ENCODE measurements at regions of chr11 and their contacts with region 1.

Region 1: GRCh38 chr11:63906585-63906984 is 10.4 kb downstream of the RCOR2 start:
- DNase-seq: peak; percentile 81
- H3K4me3 ChIP-seq: no peak overlapping the region
- H3K27ac ChIP-seq: no peak overlapping the region; a peak in 1 of 4 replicates
- H3K4me1 ChIP-seq: peaks cover 0 to 26% of the 10 kb centered on the region in 2 experiments; a peak in 1 of 4 replicates
- H3K27me3 ChIP-seq: no peaks in the 10 kb centered on the region
- CTCF ChIP-seq: peak; percentile 21
- EP300 ChIP-seq: no peak
- RAD21 ChIP-seq: no peak; the same call in 1 of the 2 replicates

Region 2: DNA sequence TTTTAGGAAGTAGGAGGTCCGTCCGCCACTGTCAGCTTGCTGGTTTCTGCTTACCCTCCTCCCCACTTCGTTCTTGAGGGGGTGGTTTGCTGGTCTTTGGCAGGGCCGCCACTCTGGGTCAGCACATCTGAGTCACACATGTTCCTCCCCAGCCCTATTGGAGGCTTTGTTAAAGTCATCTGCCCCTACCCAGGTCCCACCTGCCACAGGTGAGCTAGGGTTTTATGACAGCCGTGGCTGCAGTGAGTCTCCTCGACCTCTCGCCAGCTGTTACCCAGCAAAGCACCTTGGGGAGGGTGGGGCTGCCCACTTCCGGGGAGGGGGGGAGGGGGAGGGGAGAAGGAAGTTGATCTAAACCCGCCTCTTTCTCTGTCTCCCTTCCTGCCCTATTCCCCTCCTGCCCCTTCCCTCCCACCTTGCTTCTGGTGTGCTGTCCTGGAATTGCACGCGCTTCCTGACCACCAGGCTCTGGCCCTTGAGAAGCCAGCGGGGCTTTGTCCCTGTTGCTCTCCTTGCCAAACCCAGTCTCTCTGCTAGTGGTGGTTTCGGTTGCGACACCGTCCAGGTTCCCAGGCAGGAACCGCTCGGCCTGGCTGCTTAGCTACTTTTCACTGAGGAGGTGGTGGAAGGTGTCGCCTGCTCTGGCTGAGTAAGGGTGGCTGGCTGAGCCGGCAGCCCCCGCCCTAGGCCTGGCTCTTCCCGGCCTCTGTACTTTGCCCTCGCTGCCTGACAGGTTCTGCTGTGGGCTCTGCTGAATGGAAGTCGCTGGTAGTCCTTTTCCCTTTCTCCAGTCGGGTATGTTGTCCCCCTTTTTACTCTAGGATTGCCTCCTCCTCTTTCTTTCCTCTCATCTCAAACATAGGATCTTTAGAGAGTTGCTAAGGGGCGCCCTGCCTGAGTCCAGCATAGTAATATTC is 18.2 kb before region 1 on chr11:
- CTCF ChIA-PET with region 1: interaction called, 12 read pairs
- POLR2A ChIA-PET with region 1: no interaction called
- DNase-seq: no peak
- H3K4me3 ChIP-seq: no peak overlapping the region
- H3K27ac ChIP-seq: no peak overlapping the region
- H3K4me1 ChIP-seq: peaks cover 4 to 15% of the 10 kb centered on the region in 2 experiments; a peak in 2 of 4 replicates
- H3K27me3 ChIP-seq: no peaks in the 10 kb centered on the region
- CTCF ChIP-seq: no peak
- EP300 ChIP-seq: no peak
- RAD21 ChIP-seq: no peak

Region 3: DNA sequence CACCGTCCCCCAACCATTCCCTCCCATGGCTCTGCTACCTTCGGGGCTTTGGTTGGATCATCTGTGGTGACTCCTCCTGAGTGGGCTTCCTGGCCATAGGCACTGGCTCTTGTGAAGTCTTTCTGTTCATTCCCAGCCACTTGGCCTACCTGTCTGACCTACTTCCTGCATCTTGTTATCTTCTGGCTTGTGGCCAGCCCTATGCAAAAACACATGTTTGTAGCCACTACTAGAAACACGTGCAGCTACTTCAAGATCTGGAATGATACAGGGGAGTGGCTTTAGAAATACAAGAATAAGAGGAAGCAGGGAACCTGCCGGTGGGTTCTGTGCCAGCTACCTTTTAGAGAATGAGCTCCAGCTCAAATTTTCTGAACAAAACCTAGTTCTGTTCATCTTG is 10.5 kb before region 1 on chr11:
- CTCF ChIA-PET with region 1: interaction called, 20 read pairs
- POLR2A ChIA-PET with region 1: interaction called, 3 read pairs
- DNase-seq: no peak
- H3K4me3 ChIP-seq: no peak overlapping the region
- H3K27ac ChIP-seq: no peak overlapping the region
- H3K4me1 ChIP-seq: peaks cover 0 to 9% of the 10 kb centered on the region in 2 experiments; a peak in 1 of 4 replicates
- H3K27me3 ChIP-seq: no peaks in the 10 kb centered on the region
- CTCF ChIP-seq: no peak
- EP300 ChIP-seq: no peak
- RAD21 ChIP-seq: no peak

Region 4: GRCh38 chr11:63916837-63917691 is 10.5 kb after region 1 on chr11 and contains the start of gene RCOR2:
- CTCF ChIA-PET with region 1: interaction called, 9 read pairs
- POLR2A ChIA-PET with region 1: interaction called, 14 read pairs
- DNase-seq: peak; percentile 98
- H3K4me3 ChIP-seq: peak within 1 kb of the TSS; percentile 58 to 64
- H3K27ac ChIP-seq: peak within 1 kb of the TSS in 1 of 2 experiments; percentile 98; a peak in 2 of 4 replicates
- H3K4me1 ChIP-seq: peaks cover 4 to 44% of the 10 kb centered on the region in 2 experiments; a peak in 3 of 4 replicates
- H3K27me3 ChIP-seq: no peaks in the 10 kb centered on the region
- CTCF ChIP-seq: no peak
- EP300 ChIP-seq: no peak
- RAD21 ChIP-seq: no peak
- polyA plus RNA-seq, gene RCOR2: 1.1 and 1.4 TPM in 2 replicates

Measured in SK-N-SH (cell line).